Heart right ventricle (tissue), 16 donors: ENCODE measurements at regions of chr6 and their contacts with region 1.

Region 1: DNA sequence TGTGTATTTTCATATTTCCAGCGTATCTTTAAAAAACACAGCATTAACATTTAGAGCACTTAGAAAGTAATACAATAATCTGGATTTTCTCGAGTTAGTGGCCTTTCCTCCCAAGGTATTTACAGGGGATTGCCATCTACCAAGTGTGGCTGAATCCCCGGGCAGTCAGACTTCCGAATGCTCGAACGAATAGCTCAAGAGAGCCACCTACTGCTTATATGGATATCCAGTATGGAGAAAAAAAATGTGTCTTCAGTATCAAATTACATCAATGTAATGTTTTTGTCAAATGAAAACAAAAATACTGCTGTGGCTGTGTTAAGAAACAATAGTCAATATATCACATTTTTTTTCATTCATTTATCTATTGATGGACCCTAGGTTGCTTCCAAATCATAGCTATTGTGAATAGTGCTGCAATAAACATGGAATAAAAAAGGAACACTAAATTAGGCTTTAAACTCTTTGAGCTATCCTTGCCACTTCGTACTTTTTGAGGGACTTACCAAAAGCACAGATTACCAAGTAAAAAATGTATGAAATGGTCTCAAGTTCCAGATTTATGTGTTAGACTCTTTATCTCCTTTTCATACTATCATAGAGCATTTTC is 654.5 kb upstream of the PTCHD4 start:
- DNase-seq: no peak
- ATAC-seq: peak in 1 of 8 donors; percentile 53
- H3K4me3 ChIP-seq: no peak overlapping the region
- H3K27ac ChIP-seq: no peak overlapping the region
- H3K4me1 ChIP-seq: no peaks in the 10 kb centered on the region
- H3K27me3 ChIP-seq: peaks cover 0 to 6% (median 0%) of the 10 kb centered on the region in 7 donors
- CTCF ChIP-seq: peak in 7 of 9 donors; percentile 46 to 59 (median 51)

Region 2: GRCh38 chr6:47631269-47631772 is 1134.1 kb before region 1 on chr6:
- intact Hi-C with region 1: loop called in 1 of 10 experiments (anchors 5 kb)
- DNase-seq: no peak
- ATAC-seq: peak; percentile 55 to 87 (median 70)
- H3K4me3 ChIP-seq: no peak overlapping the region
- H3K27ac ChIP-seq: peak overlapping the region in 3 of 10 donors; percentile 31 to 65 (median 47)
- H3K4me1 ChIP-seq: peaks cover 0 to 39% (median 17%) of the 10 kb centered on the region in 9 donors
- H3K27me3 ChIP-seq: no peaks in the 10 kb centered on the region
- CTCF ChIP-seq: peak; percentile 58 to 85 (median 75)

Region 3: DNA sequence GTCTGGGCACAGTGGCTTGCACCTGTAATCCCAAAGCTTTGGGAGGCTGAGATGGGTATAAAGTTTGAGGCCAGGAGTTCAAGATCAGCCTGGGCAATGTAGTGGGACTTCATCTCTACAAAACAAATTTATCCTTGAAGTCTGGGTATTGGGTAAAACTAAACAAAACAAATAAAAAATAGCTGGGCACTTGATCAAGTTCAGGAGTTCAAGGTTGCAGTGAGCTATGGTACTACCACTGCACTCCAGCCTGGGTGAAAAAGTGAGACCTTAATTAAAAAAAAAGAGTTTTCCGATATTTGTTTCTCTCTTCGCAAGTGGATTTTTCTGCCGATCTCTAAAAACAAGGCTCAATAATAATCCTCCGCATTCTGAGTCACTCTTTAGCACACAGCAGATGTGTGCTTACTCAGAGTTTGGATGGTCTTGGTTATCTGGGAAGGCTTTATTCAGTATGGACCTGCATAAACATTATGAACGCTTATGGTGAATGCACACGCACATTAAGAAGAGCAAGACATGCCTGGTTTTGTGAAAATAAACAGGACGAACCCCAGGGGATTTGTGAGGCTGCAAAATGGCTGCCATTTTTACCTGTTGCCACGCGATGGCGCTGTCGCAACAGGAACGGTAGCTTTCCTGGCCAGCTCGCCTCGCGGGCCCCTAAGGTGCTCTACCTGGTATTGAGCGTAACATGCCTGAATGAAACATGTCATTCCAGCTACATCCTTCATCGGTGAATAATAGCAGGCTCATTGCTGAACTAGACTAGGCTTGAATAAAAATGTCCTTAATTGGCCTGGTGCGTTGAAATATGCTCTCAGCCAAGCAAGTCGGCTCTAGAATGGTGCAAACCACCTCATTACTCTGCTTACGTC is 977.6 kb before region 1 on chr6:
- intact Hi-C with region 1: loop called in 7 of 10 experiments (anchors 2 to 10 kb)
- DNase-seq: peak; percentile 29 to 54
- ATAC-seq: peak in 7 of 8 donors; percentile 58 to 78 (median 71)
- H3K4me3 ChIP-seq: peak overlapping the region in 2 of 10 donors; percentile 5 to 32
- H3K27ac ChIP-seq: no peak overlapping the region
- H3K4me1 ChIP-seq: peaks cover 0 to 11% (median 3%) of the 10 kb centered on the region in 9 donors
- H3K27me3 ChIP-seq: peaks cover 0 to 33% (median 13%) of the 10 kb centered on the region in 7 donors
- CTCF ChIP-seq: peak; percentile 74 to 95 (median 92)

Region 4: DNA sequence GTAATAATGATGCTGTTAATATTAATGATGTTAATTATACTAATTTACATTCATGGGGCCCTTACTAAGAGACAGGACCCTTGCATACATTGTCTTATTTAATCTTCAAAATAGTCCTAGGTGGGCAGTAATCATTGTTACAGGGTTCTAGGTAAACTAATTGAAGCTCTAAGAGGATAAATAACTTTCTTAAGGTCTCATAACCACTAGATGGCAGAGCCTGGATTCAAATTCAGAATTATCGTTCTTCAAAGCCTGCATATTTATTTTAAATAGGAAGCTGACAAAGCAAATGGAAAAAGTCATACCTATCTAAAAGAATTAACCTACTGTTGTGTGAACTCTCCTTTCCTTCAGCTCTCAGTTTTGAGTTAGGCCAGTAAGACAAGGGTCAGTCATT is 678.0 kb before region 1 on chr6:
- intact Hi-C with region 1: loop called in 3 of 10 experiments (anchors 10 kb)
- DNase-seq: no peak
- ATAC-seq: no peak
- H3K4me3 ChIP-seq: no peak overlapping the region
- H3K27ac ChIP-seq: no peak overlapping the region
- H3K4me1 ChIP-seq: peaks cover 0 to 4% (median 0%) of the 10 kb centered on the region in 9 donors
- H3K27me3 ChIP-seq: no peaks in the 10 kb centered on the region
- CTCF ChIP-seq: peak in 8 of 9 donors; percentile 12 to 50 (median 32)

Region 5: DNA sequence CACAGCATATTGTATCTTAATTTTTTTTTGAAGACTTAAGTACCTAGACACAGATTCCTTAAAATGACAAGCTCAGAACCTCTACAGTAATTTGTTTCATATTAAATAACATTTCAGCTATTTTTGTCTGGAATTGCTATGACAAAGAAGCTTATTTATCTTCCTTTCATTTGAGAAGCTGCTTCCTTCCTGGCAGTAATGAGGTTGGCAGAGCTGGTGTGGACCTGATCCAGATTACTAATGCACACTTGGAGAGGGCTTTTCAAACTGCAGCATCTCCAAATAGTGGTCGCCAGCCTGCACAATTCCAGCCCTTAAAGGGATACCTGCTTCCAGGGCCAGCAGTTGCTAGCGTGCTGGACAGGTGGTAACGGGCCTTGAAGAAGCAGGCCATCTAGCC is 666.5 kb before region 1 on chr6:
- intact Hi-C with region 1: loop called in 1 of 10 experiments (anchors 10 kb)
- DNase-seq: no peak
- ATAC-seq: peak in 3 of 8 donors; percentile 11 to 53 (median 37)
- H3K4me3 ChIP-seq: no peak overlapping the region
- H3K27ac ChIP-seq: peak overlapping the region in 2 of 10 donors; percentile 25 to 65
- H3K4me1 ChIP-seq: peaks cover 0 to 21% (median 5%) of the 10 kb centered on the region in 9 donors
- H3K27me3 ChIP-seq: no peaks in the 10 kb centered on the region
- CTCF ChIP-seq: no peak

Region 6: DNA sequence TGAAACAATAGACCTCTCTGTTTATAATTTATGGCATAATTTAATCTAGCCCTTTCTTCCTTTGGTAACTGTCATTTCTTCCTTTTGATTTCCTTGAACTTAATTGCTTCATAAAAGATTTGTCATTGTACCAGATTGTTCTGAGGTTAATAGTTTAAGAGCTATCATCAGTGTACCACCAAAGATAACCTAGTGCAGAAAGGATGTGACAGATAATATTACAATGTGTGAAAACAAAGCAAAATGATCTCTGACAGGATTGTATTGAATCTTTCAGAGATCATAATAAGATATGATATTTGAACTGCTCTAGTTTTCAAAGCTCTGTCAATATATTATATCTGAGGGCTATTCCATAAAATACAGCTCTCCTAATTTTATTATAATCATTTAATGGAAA is 522.4 kb before region 1 on chr6:
- intact Hi-C with region 1: no loop called
- DNase-seq: no peak
- ATAC-seq: no peak
- H3K4me3 ChIP-seq: no peak overlapping the region
- H3K27ac ChIP-seq: no peak overlapping the region
- H3K4me1 ChIP-seq: no peaks in the 10 kb centered on the region
- H3K27me3 ChIP-seq: no peaks in the 10 kb centered on the region
- CTCF ChIP-seq: no peak